Aorta (tissue), 5 donors: ENCODE measurements at regions of chr1 and their contacts with region 1.

Region 1: DNA sequence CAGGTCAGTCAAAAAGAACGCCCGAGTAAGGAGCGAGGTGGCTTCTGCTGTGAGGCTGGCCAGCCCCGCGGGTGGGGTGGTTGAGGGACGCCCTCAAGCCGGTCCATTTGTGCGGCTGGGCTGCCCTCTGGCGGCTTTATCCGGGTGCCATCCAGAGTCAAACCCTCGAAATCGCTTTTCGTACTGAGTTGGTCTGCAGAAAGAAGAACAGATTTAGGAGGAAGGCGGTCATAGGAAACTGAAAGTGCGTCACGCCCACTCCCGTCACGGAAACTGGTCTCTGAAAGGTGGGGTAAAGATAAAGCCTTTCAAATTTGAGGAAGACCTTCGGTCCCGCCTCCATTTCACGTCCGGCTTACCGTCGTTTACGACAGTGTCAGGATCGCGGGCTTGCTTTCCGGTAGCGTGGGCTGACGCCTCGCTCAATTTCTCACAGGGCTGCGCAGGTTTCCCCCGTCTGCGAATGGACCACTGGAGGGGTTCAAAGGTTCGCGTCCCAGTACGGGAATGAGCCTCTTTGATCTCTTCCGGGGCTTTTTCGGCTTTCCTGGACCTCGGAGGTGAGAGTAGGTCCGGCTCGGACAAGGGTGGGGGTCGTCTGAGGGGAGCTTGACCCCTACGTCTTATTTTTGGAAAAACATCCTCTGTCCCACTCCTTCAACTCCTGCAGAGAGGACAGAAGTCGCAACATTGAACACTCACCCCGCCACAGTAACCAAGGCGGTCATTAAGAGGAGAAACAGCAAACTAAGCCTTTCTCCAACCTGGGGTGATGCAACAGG is at the start of gene HAX1:
- DNase-seq: peak; percentile 97 to 98
- ATAC-seq: peak; percentile 97
- H3K4me3 ChIP-seq: peak within 1 kb of the TSS; percentile 74 to 79
- H3K27ac ChIP-seq: peak within 1 kb of the TSS; percentile 57 to 58
- H3K4me1 ChIP-seq: no peaks in the 10 kb centered on the region
- H3K27me3 ChIP-seq: no peaks in the 10 kb centered on the region
- total RNA-seq, gene HAX1: 52.2 to 57.1 TPM

Region 2: DNA sequence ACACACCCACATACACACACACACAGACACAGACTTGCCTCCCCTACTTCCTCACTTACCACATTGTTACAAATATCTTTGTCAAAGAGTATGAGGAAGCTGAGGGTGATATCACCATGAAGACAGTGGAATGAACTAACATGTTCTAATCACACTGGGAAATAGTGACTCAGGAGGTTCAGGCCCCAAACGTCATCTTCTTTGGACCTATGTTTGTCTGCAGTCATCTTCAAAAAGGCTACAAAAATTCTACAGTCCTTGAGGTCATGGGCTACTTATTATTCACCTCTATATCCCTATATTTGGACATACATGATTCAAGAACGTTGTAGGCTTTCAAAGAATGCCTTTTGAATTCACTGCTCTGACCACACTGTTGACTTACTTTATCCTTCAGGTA is 1599.4 kb before region 1 on chr1:
- intact Hi-C with region 1: no loop called
- DNase-seq: no peak
- ATAC-seq: no peak
- H3K4me3 ChIP-seq: no peak overlapping the region
- H3K27ac ChIP-seq: no peak overlapping the region
- H3K4me1 ChIP-seq: no peaks in the 10 kb centered on the region
- H3K27me3 ChIP-seq: no peaks in the 10 kb centered on the region

Region 3: GRCh38 chr1:153796791-153797659 is 475.4 kb before region 1 on chr1:
- intact Hi-C with region 1: loop called in 1 of 2 experiments (anchors 5 kb)
- DNase-seq: peak; percentile 83 to 87
- ATAC-seq: peak; percentile 71
- H3K4me3 ChIP-seq: no peak overlapping the region
- H3K27ac ChIP-seq: no peak overlapping the region
- H3K4me1 ChIP-seq: no peaks in the 10 kb centered on the region
- H3K27me3 ChIP-seq: no peaks in the 10 kb centered on the region

Region 4: DNA sequence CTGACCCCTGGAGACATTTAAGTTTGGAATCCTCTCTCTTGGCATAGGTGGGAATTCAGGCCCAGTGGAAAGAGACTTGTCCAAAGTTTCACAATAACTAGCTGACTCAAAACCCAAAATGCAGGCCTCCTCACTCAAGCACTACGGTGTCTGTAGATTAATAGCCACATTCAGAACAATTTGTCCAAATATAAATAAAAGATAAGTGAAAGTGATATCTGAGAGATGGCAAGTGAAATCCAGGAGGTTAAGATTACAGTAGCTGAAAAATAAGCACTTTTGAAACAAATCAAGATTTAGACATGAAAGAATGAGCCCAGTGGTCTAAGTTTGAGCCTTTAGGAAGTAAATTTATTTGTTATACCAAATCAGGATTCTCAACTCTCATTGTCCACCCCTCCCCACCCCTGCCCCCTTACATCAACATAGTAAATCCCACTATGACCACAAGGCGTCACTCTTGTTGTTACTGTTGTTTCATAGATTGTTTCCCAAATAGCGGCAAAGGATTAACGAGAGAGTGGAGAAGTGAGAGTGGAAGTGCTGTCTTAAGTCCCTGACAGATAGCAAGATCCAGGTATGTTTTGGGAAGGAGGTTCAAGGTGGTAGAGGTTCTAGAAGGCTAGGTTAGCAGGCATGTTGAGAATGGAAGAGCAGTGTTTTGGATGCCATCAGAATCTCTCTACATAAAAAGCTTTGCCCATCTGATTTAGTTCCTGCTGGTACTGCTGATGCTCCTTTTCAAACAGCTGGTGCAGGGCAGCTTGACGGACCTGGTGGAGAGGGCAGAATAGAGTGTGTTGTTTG is 73.4 kb before region 1 on chr1:
- intact Hi-C with region 1: loop called in 1 of 2 experiments (anchors 2 kb)
- DNase-seq: no peak
- ATAC-seq: peak; percentile 80
- H3K4me3 ChIP-seq: no peak overlapping the region
- H3K27ac ChIP-seq: peak overlapping the region in 1 of 2 donors; percentile 38
- H3K4me1 ChIP-seq: peaks cover 0 to 2% of the 10 kb centered on the region in 2 donors
- H3K27me3 ChIP-seq: no peaks in the 10 kb centered on the region

Region 5: GRCh38 chr1:154220071-154220969 is 52.1 kb before region 1 on chr1 and contains the start of gene UBAP2L:
- intact Hi-C with region 1: loop called in 1 of 2 experiments (anchors 2 kb)
- DNase-seq: peak; percentile 100
- ATAC-seq: peak; percentile 98
- H3K4me3 ChIP-seq: peak within 1 kb of the TSS; percentile 70 to 89
- H3K27ac ChIP-seq: peak within 1 kb of the TSS; percentile 58 to 98
- H3K4me1 ChIP-seq: peaks cover 0 to 2% of the 10 kb centered on the region in 2 donors
- H3K27me3 ChIP-seq: no peaks in the 10 kb centered on the region
- total RNA-seq, gene UBAP2L: 110 to 146 TPM

Region 6: DNA sequence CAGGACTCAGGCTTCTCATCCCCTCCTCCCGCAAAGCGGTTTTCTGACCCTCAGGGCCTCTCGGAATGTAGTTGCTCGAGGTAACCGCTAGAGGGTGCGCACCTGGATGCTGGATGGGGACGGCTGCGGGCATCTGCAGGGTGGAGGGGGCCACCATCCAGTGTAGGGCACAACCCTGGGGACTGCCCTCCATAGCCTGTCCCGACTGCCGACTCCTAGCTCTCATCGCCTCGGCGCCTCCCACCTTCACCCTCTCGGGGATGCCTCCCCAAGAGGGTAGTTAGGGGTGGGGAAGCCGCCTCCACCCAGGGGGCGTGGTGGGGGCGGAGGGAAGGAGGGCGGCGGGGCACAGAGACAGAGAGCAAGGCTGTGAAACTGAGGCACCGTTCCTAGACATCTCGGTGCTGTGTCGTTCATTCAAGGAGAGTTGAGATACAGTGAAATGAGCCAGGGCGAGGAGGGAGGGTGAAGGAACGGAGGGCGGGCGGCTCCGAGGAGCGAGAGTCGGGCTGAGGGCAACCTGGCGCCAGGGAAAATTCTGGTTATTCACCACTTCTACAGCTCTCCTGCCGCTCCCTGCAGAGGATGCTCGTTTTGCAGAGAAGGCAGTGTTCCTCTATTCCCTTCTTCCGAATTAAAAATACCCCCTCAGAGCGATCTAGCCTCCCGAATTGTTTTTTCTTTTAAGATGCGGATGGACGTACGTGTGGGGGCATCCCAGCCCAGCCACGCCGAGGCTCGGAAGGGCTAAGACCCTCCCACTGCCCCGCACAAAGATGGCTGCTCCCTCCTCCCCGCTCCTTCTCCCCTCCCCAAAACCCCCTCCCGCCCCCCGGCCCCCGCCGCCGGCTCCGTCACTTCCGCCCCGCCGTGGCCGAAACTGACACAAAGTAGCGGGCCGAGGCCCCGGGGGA is 52.5 kb after region 1 on chr1 and contains the start of gene ATP8B2:
- intact Hi-C with region 1: loop called in 1 of 2 experiments (anchors 5 kb)
- DNase-seq: peak; percentile 84 to 93
- ATAC-seq: peak; percentile 82
- H3K4me3 ChIP-seq: peak within 1 kb of the TSS; percentile 90 to 91
- H3K27ac ChIP-seq: peak within 1 kb of the TSS; percentile 81 to 95
- H3K4me1 ChIP-seq: peaks cover 0 to 7% of the 10 kb centered on the region in 2 donors
- H3K27me3 ChIP-seq: no peaks in the 10 kb centered on the region
- total RNA-seq, gene ATP8B2: 122 to 176 TPM